Left ventricle myocardium superior (tissue), 1 donor: ENCODE measurements at regions of chr2 and their contacts with region 1.

Region 1: DNA sequence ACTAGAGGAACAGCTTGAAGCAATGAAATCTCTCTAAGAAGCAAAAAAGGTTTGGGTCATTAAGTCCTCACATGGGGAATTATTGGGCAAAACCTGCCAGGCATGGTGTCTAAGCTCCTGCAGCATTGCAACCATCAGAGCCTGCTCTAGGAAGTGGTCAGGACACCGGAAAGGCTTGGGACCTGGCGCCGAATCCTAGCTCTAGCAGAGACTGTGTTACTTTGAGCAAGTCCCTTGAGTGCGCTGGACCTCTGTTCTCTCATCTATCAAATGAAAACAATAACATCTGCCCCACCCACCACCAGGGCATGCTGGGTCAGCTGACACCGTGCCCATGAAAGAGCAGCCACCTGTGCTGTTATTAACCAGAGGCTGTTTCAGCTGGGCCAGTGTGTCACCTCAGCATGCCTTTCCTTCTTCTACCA is 6.3 kb downstream of the TMEM127 start:
- DNase-seq: peak; percentile 60
- ATAC-seq: peak; percentile 55

Region 2: GRCh38 chr2:96208143-96209010 is 51.1 kb before region 1 on chr2 and contains the start of gene STARD7:
- intact Hi-C with region 1: loop called (anchors 5 kb)
- DNase-seq: peak; percentile 100
- ATAC-seq: peak; percentile 96
- total RNA-seq, gene STARD7: 214 TPM

Region 3: DNA sequence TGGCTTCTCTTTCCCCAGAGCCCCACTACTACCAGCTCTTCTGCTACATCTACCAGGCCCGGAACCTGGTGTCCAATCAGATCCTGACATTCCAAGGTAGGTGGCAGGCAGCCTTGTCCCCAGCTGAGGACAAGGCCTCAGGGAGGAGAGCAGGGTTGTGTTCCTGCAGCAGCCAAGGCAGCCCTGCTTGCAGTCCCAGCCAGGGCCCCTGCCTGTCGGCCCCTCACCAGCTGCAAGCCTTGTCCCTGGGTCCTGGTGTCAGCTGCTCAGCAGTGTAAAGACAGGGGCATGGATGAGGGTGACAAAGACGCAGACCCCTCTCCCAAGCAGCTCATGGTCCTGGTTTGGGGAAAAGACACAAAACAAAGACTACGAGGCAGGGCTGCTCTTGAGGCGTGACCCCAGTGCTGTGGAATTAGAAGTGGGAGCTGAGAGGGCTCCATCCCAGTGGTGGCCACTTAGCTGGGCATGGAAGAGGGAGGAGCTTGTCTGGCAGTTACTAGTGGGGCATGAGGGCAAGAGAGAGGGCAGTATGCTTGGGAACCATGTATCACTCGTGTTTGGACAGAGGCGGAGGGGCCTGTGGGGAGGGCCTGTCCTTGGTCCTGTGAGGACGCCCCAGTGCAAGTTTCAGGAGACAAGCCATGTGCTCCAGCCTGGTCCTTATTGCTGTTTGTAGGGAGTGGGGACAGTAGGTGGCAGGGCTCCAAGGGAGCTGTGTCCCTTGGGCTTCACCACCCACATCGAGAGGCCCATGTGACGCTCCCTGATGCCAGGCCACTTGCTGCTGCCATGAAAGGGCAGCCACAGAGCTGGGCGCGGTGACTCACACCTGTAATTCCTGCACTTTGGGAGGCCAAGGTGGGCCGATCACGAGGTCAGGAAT is 432.8 kb after region 1 on chr2:
- intact Hi-C with region 1: no loop called
- DNase-seq: no peak
- ATAC-seq: peak; percentile 38